ENCODE measurements at regions of chr3 and their contacts with region 1.

Region 1: DNA sequence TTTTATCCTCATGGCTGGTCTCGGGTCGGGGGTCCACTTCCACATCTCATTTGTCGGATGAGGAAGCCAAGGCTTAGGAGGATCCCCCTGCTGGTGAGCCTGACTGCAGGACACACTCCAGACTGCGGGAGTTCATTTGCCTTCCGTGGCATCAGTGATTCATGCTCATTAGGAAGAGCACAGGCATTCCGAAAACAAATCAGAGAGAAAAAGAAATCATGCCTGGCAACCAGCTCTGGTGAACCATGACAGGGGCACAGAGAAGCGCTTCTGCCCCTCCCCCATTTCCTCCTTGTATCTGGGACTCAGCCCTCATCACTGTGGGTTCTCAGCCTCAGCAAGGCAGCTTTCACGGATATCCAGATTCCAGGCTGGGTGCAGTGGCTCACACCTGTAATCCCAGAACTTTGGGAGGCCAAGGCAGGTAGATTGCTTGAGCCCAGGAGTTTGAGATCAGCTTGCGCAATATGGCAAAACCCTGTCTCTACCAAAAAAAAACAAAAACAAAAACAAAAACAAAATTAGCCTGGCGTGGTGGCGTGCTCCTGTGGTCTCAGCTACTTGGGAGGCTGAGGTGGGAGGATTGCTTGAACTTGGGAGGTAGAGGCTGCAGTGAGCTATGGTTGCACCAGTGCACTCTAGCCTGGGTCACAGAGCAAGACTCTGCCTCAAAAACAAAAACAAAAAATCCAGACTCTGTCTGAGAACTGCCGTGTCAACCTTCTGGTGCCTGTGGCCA is 28.4 kb downstream of the IRAK2 start:
- DNase-seq: peak in 13 of 14 experiments; percentile 33 to 83 (median 62)
- ATAC-seq: peak; percentile 51
- H3K4me3 ChIP-seq: peak overlapping the region; percentile 7
- H3K4me3 Mint-ChIP-seq: peak overlapping the region; percentile 86
- H3K27ac ChIP-seq: peak overlapping the region; percentile 89 to 90
- H3K27ac Mint-ChIP-seq: peak overlapping the region; percentile 96
- H3K4me1 ChIP-seq: peaks cover 96% of the 10 kb centered on the region
- H3K4me1 Mint-ChIP-seq: peaks cover 81% of the 10 kb centered on the region
- H3K27me3 ChIP-seq: no peaks in the 10 kb centered on the region
- H3K27me3 Mint-ChIP-seq: no peaks in the 10 kb centered on the region
- CTCF ChIP-seq: no peak

Region 2: GRCh38 chr3:9536212-9536611 is 656.9 kb before region 1 on chr3:
- CTCF ChIA-PET with region 1: no interaction called
- POLR2A ChIA-PET with region 1: no interaction called
- intact Hi-C with region 1: no loop called
- DNase-seq: no peak
- ATAC-seq: no peak
- H3K4me3 ChIP-seq: no peak overlapping the region
- H3K4me3 Mint-ChIP-seq: no peak overlapping the region
- H3K27ac ChIP-seq: no peak overlapping the region
- H3K27ac Mint-ChIP-seq: no peak overlapping the region
- H3K4me1 ChIP-seq: no peaks in the 10 kb centered on the region
- H3K4me1 Mint-ChIP-seq: no peaks in the 10 kb centered on the region
- H3K27me3 ChIP-seq: peaks cover 6 to 15% of the 10 kb centered on the region in 2 experiments
- H3K27me3 Mint-ChIP-seq: peaks cover 27% of the 10 kb centered on the region
- CTCF ChIP-seq: no peak

Region 3: DNA sequence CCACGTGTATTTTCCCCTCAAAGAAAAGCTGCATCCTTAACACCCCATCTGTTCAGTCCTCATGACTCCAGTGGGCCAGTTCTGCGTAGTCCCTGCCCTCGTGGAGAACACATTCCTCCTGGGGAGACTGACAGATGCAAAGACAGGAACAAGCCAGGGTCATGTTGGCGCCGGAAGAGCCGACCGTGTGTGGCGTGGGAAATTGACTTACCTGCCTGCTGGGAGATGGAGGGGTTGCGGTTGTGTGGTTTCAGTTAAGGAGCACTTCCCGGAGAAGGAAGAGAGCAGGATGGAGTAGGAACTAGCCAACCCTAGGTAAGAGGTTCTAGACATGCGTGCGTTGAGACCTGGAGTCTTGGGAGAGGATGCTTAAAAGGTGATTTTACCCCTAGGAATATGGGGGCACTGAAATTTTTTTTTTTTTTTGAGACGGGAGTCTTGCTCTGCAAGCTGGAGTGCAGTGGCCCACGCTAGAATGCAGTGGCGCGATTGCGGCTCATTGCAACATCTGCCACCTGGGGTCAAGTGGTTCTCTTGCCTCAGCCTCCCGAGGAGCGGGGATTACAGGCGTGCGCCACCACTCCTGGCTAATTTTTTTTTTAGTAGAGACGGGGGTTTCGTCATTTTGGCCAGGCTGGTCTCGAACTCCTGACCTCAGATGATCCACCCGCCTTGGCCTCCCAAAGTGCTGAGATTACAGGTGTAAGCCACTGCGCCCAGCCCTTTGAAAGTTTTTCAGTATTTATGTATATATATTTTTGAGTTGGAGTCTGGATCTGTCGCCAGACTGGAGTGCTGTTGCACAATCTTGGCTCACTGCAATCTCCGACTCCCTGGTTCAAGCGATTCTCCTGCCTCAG is 50.2 kb before region 1 on chr3:
- CTCF ChIA-PET with region 1: no interaction called
- POLR2A ChIA-PET with region 1: interaction called, 28 read pairs
- intact Hi-C with region 1: loop called in 1 of 2 experiments (anchors 10 kb)
- DNase-seq: peak in 5 of 14 experiments; percentile 1 to 54 (median 42)
- ATAC-seq: no peak
- H3K4me3 ChIP-seq: peak overlapping the region; percentile 85
- H3K4me3 Mint-ChIP-seq: peak overlapping the region; percentile 90
- H3K27ac ChIP-seq: peak overlapping the region in 1 of 2 donors; percentile 22
- H3K27ac Mint-ChIP-seq: peak overlapping the region; percentile 85
- H3K4me1 ChIP-seq: peaks cover 54% of the 10 kb centered on the region
- H3K4me1 Mint-ChIP-seq: peaks cover 40% of the 10 kb centered on the region
- H3K27me3 ChIP-seq: no peaks in the 10 kb centered on the region
- H3K27me3 Mint-ChIP-seq: no peaks in the 10 kb centered on the region
- CTCF ChIP-seq: no peak

Region 4: GRCh38 chr3:10213156-10213792 is 20.2 kb after region 1 on chr3:
- CTCF ChIA-PET with region 1: no interaction called
- POLR2A ChIA-PET with region 1: interaction called, 13 read pairs
- intact Hi-C with region 1: no loop called
- DNase-seq: no peak
- ATAC-seq: no peak
- H3K4me3 ChIP-seq: no peak overlapping the region
- H3K4me3 Mint-ChIP-seq: no peak overlapping the region
- H3K27ac ChIP-seq: no peak overlapping the region
- H3K27ac Mint-ChIP-seq: no peak overlapping the region
- H3K4me1 ChIP-seq: no peaks in the 10 kb centered on the region
- H3K4me1 Mint-ChIP-seq: no peaks in the 10 kb centered on the region
- H3K27me3 ChIP-seq: no peaks in the 10 kb centered on the region
- H3K27me3 Mint-ChIP-seq: no peaks in the 10 kb centered on the region
- CTCF ChIP-seq: no peak

Region 5: DNA sequence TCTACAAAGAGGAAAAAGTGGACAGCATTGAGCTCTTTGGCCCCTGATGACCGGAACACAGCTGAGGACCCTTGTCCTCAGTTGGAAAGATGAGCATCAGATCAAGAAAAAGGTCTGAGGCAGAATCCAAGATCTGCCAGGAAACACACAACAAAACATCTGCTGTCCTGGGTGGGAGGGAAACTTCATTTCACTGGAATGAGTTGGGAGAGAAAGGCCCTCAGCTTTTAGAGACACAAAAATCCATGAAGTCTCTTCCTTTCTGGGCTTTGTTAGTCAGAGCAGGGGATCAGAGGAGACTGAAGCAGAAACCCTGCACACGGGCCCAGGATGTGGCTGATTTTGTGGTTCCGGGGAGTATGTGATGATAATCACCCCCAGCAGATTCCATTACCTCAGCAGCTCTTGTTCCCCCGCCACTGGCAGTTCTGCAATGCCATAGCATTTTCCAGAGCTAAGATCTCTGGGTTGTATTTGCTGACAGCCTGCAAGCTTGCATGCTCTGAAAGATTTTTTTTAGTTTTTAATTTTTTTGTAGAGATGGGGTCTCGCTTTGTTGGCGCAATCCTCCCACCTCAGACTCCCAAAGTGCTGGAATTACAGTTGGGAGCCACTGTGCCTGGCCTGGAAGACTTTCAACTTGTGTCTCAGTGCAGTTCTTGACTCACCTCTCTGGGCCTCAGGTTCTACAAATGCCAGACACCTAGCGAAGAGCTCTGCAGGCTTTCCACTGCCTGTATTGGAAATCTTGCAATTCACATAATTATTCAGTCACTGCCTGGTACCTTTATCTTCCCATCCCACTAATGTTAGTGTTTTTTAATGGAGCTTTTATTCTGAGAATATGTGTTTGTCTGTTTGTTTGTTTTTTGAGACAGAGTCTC is 49.3 kb after region 1 on chr3:
- CTCF ChIA-PET with region 1: no interaction called
- POLR2A ChIA-PET with region 1: interaction called, 17 read pairs
- intact Hi-C with region 1: loop called in 1 of 2 experiments (anchors 2 kb)
- DNase-seq: peak; percentile 42 to 94 (median 68)
- ATAC-seq: peak; percentile 94
- H3K4me3 ChIP-seq: peak overlapping the region; percentile 6
- H3K4me3 Mint-ChIP-seq: peak overlapping the region; percentile 77
- H3K27ac ChIP-seq: peak overlapping the region; percentile 41 to 63
- H3K27ac Mint-ChIP-seq: peak overlapping the region; percentile 91
- H3K4me1 ChIP-seq: peaks cover 59% of the 10 kb centered on the region
- H3K4me1 Mint-ChIP-seq: peaks cover 62% of the 10 kb centered on the region
- H3K27me3 ChIP-seq: no peaks in the 10 kb centered on the region
- H3K27me3 Mint-ChIP-seq: no peaks in the 10 kb centered on the region
- CTCF ChIP-seq: no peak